HepG2 (cell line): ENCODE measurements at regions of chr3 and their contacts with region 1.

Region 1: DNA sequence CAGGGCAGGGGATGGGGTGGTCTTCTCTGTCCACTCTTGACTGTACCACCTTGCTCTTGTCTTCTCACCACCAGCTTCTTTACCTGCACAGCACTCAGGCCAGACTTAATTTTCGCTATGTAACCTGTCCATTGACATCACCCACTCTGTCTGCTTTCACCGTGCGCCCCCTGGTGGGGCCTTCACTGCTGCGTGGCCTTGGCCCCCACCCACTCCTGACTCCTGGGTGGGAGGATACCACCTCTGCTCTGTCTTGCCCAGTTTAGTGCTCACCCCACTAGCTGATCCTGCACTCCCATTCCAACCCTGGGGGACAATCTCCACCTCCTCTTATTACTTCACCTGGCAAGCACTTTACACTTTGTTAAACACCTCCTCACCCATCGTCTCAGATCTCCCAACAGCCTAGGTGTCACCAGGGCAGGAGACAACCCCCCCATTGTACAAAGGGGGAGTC is 17.7 kb downstream of the PTH1R start:
- DNase-seq: peak; percentile 36
- ATAC-seq: peak; percentile 67
- H3K4me3 ChIP-seq: no peak overlapping the region
- H3K27ac ChIP-seq: no peak overlapping the region
- H3K4me1 ChIP-seq: peaks cover 13% of the 10 kb centered on the region
- H3K27me3 ChIP-seq: peaks cover 6 to 38% of the 10 kb centered on the region in 2 experiments; a peak in 4 of 5 replicates
- CTCF ChIP-seq: peak; percentile 88
- EP300 ChIP-seq: no peak
- POLR2A ChIP-seq: no peak
- RAD21 ChIP-seq: peak; percentile 85

Region 2: GRCh38 chr3:46663591-46664135 is 231.6 kb before region 1 on chr3:
- CTCF ChIA-PET with region 1: no interaction called
- POLR2A ChIA-PET with region 1: no interaction called
- in situ Hi-C with region 1: no loop called
- intact Hi-C with region 1: no loop called
- DNase-seq: no peak
- ATAC-seq: peak; percentile 56
- H3K4me3 ChIP-seq: no peak overlapping the region
- H3K27ac ChIP-seq: no peak overlapping the region
- H3K4me1 ChIP-seq: no peaks in the 10 kb centered on the region
- H3K27me3 ChIP-seq: peaks cover 3 to 34% of the 10 kb centered on the region in 2 experiments; a peak in 2 of 5 replicates
- CTCF ChIP-seq: peak; percentile 27; the same call in 1 of the 2 replicates
- EP300 ChIP-seq: no peak
- POLR2A ChIP-seq: no peak
- RAD21 ChIP-seq: no peak

Region 3: DNA sequence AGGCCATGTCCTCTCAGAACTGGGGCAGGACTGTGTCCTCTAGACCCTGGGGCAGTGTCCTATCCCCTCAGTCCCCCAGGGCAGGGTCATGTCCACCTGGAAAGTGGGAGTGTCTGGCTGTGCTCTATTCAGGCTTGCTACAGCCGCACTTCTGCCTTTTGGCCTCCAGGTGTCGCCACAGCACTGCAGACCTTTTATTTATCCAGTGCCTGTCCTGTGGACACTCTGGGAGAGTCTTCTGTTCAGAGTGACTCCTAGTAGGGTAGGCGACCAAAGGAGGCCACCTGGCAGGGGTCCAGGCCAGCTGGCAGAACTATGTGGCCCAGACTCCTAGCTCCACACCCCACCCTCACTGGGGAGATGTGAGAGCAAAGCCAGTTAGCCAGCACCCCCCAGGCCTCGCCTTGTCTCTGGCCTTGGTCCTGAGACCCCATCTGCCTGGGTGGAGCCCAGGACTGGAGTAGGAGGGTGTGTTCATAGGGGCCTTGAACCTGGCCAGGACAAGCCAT is 190.2 kb before region 1 on chr3:
- CTCF ChIA-PET with region 1: interaction called, 39 read pairs
- POLR2A ChIA-PET with region 1: no interaction called
- in situ Hi-C with region 1: no loop called
- intact Hi-C with region 1: loop called (anchors 1 kb)
- DNase-seq: peak; percentile 63
- ATAC-seq: peak; percentile 91
- H3K4me3 ChIP-seq: no peak overlapping the region
- H3K27ac ChIP-seq: no peak overlapping the region
- H3K4me1 ChIP-seq: no peaks in the 10 kb centered on the region
- H3K27me3 ChIP-seq: peaks cover 1 to 12% of the 10 kb centered on the region in 2 experiments; a peak in 2 of 5 replicates
- CTCF ChIP-seq: peak; percentile 96
- EP300 ChIP-seq: no peak
- POLR2A ChIP-seq: no peak
- RAD21 ChIP-seq: peak; percentile 93

Region 4: GRCh38 chr3:46860017-46860830 is 35.0 kb before region 1 on chr3:
- CTCF ChIA-PET with region 1: no interaction called
- POLR2A ChIA-PET with region 1: no interaction called
- in situ Hi-C with region 1: no loop called
- intact Hi-C with region 1: loop called (anchors 2 kb)
- DNase-seq: peak; percentile 44
- ATAC-seq: peak; percentile 85
- H3K4me3 ChIP-seq: no peak overlapping the region
- H3K27ac ChIP-seq: no peak overlapping the region
- H3K4me1 ChIP-seq: peaks cover 27% of the 10 kb centered on the region
- H3K27me3 ChIP-seq: peaks cover 5 to 17% of the 10 kb centered on the region in 2 experiments; a peak in 3 of 5 replicates
- CTCF ChIP-seq: peak; percentile 75
- EP300 ChIP-seq: no peak
- POLR2A ChIP-seq: no peak
- RAD21 ChIP-seq: peak; percentile 42; the same call in 1 of the 2 replicates

Region 5: DNA sequence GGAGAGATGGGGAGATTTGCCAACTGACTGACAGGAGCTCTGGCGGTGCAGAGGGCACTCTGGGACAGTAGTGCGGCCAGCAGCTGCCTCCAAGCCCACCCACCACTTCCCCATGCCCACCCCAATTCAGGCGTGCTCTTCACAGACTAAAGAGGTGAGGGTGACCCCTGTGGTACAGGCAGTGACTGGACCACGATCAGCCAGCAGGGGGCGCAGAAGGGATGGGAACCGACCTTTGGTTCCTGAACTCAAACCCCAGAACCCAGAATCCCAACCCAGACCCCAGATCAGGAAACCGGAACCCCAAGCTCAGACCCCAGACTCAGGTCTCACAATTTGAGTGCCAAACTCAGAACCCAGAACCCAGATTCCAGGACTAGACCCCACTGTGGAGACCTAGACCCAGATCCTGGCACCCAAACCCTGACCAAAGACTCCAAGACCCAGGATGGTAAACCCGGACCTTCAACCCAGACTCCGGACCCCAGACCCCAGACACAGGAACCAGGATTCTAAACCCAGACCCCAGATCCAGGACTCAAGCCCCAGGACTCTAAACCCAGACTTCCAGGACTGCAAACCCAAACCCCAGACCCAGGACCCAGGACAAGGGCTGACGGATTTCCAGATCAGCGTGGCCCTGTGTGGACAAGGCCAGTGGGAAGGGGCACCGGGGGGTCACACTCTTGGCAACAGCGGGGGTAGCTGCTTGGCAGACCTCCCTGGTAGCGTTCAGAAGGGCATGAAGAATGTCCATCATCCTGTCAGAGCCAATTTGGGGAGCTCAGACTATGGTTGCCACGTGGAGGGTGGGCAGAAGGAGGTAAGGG is 28.3 kb before region 1 on chr3:
- CTCF ChIA-PET with region 1: interaction called, 18 read pairs
- POLR2A ChIA-PET with region 1: no interaction called
- in situ Hi-C with region 1: no loop called
- intact Hi-C with region 1: loop called (anchors 2 kb)
- DNase-seq: peak; percentile 39
- ATAC-seq: peak; percentile 60
- H3K4me3 ChIP-seq: no peak overlapping the region
- H3K27ac ChIP-seq: no peak overlapping the region
- H3K4me1 ChIP-seq: peaks cover 49% of the 10 kb centered on the region
- H3K27me3 ChIP-seq: peaks cover 3 to 14% of the 10 kb centered on the region in 2 experiments; a peak in 3 of 5 replicates
- CTCF ChIP-seq: peak; percentile 86
- EP300 ChIP-seq: no peak
- POLR2A ChIP-seq: no peak
- RAD21 ChIP-seq: peak; percentile 60; the same call in 1 of the 2 replicates